ENCODE measurements at regions of chr7 and their contacts with region 1.

Region 1: DNA sequence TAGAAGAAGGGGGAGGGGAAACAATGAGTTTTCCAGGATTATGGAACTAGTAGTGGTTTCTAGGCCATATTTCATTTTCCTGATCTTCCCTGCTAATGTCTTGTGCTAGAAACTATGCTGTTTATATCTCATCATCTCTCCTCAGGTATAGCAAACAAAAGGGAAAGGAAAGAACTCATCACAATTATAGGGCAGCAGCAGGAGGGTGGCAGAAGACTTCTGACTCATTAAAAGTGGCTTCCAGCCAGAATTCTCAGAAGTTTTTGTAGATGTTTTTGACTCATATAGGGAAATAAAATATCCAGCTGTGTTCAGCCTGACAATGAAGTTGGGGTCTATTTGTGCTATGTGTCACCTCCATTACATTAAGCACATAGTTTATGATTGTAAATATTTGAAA is 6.5 kb downstream of the AHR start:
- DNase-seq: no peak
- ATAC-seq: peak; percentile 25
- H3K4me3 ChIP-seq: no peak overlapping the region
- H3K27ac ChIP-seq: no peak overlapping the region
- H3K4me1 ChIP-seq: peaks cover 3% of the 10 kb centered on the region
- H3K27me3 ChIP-seq: no peaks in the 10 kb centered on the region
- CTCF ChIP-seq: no peak
- EP300 ChIP-seq: no peak
- POLR2A ChIP-seq: no peak
- RAD21 ChIP-seq: no peak

Region 2: GRCh38 chr7:17318146-17318545 is 13.2 kb after region 1 on chr7:
- CTCF ChIA-PET with region 1: interaction called, 6 read pairs
- POLR2A ChIA-PET with region 1: no interaction called
- RAD21 ChIA-PET with region 1: interaction called, 3 read pairs
- SMC1A ChIA-PET with region 1: interaction called, 19 read pairs
- in situ Hi-C with region 1: no loop called
- intact Hi-C with region 1: no loop called
- DNase-seq: no peak
- ATAC-seq: no peak
- H3K4me3 ChIP-seq: no peak overlapping the region
- H3K27ac ChIP-seq: no peak overlapping the region
- H3K4me1 ChIP-seq: no peaks in the 10 kb centered on the region
- H3K27me3 ChIP-seq: no peaks in the 10 kb centered on the region
- CTCF ChIP-seq: no peak
- EP300 ChIP-seq: no peak
- POLR2A ChIP-seq: no peak
- RAD21 ChIP-seq: no peak

Region 3: DNA sequence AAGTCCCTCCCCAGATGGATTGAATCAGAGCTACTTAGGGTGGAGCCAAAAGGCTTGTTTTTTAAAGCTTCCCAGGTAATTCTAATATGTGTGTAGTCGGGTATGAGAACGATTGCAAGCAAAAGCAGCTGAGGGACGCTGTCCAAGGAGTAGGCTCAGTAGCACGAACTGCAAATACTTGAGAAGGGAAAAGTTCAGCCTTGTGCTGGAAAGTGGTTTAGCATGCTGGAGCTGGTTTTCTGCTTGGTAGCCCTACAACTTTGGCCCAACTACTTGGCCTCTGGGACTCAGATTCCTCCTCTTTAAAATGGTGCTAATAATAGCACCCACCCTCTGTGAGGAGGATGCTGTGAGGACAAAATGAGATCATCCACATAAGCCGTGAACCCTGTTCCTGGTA is 69.7 kb after region 1 on chr7:
- CTCF ChIA-PET with region 1: interaction called, 7 read pairs
- POLR2A ChIA-PET with region 1: no interaction called
- RAD21 ChIA-PET with region 1: interaction called, 5 read pairs
- SMC1A ChIA-PET with region 1: interaction called, 22 read pairs
- in situ Hi-C with region 1: no loop called
- intact Hi-C with region 1: no loop called
- DNase-seq: no peak
- ATAC-seq: peak; percentile 29
- H3K4me3 ChIP-seq: no peak overlapping the region
- H3K27ac ChIP-seq: no peak overlapping the region
- H3K4me1 ChIP-seq: no peaks in the 10 kb centered on the region
- H3K27me3 ChIP-seq: no peaks in the 10 kb centered on the region
- CTCF ChIP-seq: no peak
- EP300 ChIP-seq: no peak
- POLR2A ChIP-seq: no peak
- RAD21 ChIP-seq: no peak

Region 4: DNA sequence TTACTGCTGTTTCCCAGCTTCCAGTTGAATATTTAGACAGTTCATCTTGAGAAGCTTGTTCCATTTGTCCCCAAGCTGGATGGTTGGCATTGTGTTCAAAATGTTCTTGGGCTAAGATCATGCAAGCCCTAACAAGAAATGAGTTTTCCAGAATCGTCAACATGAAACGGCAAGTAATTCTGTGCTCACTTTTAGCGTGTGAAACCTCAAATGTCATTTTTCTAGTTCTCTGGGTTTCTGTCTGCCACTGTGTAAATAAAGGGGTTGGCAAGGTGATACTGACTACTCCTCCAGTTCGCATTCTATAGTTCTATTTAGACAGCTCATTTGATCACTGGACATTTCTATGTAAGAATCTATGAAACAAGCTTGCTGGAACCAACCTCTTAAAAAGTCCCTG is 187.5 kb after region 1 on chr7:
- CTCF ChIA-PET with region 1: interaction called, 5 read pairs
- POLR2A ChIA-PET with region 1: interaction called, 3 read pairs
- RAD21 ChIA-PET with region 1: interaction called, 10 read pairs
- SMC1A ChIA-PET with region 1: interaction called, 10 read pairs
- in situ Hi-C with region 1: no loop called
- intact Hi-C with region 1: no loop called
- DNase-seq: peak; percentile 41
- ATAC-seq: peak; percentile 83
- H3K4me3 ChIP-seq: no peak overlapping the region
- H3K27ac ChIP-seq: no peak overlapping the region
- H3K4me1 ChIP-seq: no peaks in the 10 kb centered on the region
- H3K27me3 ChIP-seq: no peaks in the 10 kb centered on the region
- CTCF ChIP-seq: no peak
- EP300 ChIP-seq: peak; percentile 77 to 95
- POLR2A ChIP-seq: no peak
- RAD21 ChIP-seq: no peak

Region 5: DNA sequence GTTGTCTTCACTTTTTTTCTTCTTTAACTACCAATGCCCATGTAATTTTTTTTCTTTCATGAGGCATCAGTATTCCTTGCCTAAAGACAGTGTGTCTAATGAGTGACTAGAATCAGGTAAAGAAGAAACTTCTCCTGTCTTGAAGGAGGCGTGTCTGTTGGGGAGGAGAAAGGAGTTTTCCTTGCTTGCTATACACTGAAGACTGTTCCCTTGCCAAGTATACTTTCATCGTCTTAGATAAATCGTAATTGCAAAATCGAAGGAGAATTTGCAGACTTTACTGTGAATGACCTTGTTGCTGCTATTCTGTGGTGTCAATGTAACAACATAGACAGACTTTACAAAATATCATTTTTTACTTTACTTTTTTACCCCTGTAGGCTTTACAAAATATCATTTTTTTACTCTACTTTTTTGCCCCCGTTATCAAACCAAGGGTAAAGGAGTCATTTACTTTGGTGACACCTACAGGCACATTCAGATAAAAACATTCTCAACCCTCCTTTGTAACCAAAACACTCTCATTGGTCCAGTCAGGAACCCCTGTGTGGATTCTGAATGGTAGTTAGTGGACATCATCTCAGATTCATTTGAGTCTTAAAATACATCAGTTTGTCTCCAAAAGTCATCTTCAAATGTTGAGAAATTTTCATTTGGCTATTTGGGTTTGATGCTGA is 226.0 kb after region 1 on chr7:
- CTCF ChIA-PET with region 1: interaction called, 56 read pairs
- POLR2A ChIA-PET with region 1: no interaction called
- RAD21 ChIA-PET with region 1: interaction called, 34 read pairs
- SMC1A ChIA-PET with region 1: interaction called, 24 read pairs
- in situ Hi-C with region 1: no loop called
- intact Hi-C with region 1: loop called (anchors 1 kb)
- DNase-seq: peak; percentile 19
- ATAC-seq: peak; percentile 93
- H3K4me3 ChIP-seq: no peak overlapping the region
- H3K27ac ChIP-seq: no peak overlapping the region
- H3K4me1 ChIP-seq: no peaks in the 10 kb centered on the region
- H3K27me3 ChIP-seq: no peaks in the 10 kb centered on the region; a peak in 1 of 4 replicates
- CTCF ChIP-seq: peak; percentile 14 to 57 (median 29); a peak in 3 of 6 replicates
- EP300 ChIP-seq: no peak
- POLR2A ChIP-seq: no peak
- RAD21 ChIP-seq: peak; percentile 79

Region 6: DNA sequence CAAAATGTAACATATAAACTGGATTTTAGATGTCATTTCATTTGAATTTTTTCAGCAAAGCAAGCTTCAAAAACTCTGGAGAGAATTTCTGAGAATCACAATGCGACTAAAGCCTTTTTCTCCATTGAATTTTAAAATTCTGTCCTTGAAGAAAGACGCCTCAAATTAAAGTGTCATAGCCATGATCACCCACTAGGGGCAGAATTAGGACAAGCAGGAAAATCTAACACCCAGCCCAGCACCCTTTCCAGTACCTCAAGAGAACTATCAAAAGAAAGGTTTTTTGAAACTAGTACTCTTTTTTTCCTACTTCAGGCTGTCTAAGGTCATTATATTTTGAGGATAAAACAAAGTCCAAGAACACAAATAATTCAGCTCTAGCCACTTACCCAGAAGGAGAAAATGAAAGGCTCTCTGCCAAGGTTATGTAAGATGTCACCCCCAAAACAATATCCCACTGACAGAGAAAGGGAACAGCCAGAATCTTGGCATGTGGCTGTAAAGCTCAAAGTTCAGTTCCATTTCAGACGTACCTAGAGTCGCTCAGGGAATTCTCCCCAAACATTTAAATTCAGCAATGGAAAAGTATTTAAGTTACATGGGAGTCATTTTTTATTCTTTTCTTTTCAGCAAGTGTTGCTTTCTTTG is 335.9 kb after region 1 on chr7:
- CTCF ChIA-PET with region 1: interaction called, 17 read pairs
- POLR2A ChIA-PET with region 1: no interaction called
- RAD21 ChIA-PET with region 1: interaction called, 12 read pairs
- SMC1A ChIA-PET with region 1: interaction called, 9 read pairs
- in situ Hi-C with region 1: loop called (anchors 5 kb)
- intact Hi-C with region 1: loop called (anchors 1 kb)
- DNase-seq: no peak
- ATAC-seq: peak; percentile 63
- H3K4me3 ChIP-seq: no peak overlapping the region
- H3K27ac ChIP-seq: no peak overlapping the region
- H3K4me1 ChIP-seq: no peaks in the 10 kb centered on the region
- H3K27me3 ChIP-seq: no peaks in the 10 kb centered on the region; a peak in 2 of 4 replicates
- CTCF ChIP-seq: peak; percentile 50 to 65 (median 62)
- EP300 ChIP-seq: no peak
- POLR2A ChIP-seq: no peak
- RAD21 ChIP-seq: peak; percentile 27; the same call in 1 of the 2 replicates